A549 (cell line): ENCODE measurements at regions of chr10 and their contacts with region 1.

Region 1: GRCh38 chr10:100878291-100878910 is 34.4 kb upstream of the SLF2 start:
- DNase-seq: peak; percentile 80 to 92
- ATAC-seq: peak; percentile 90 to 97
- H3K4me3 ChIP-seq: no peak overlapping the region
- H3K27ac ChIP-seq: peak overlapping the region in 1 of 2 experiments; percentile 64; a peak in 2 of 6 replicates
- H3K4me1 ChIP-seq: peaks cover 15% of the 10 kb centered on the region; the same call in 2 of the 3 replicates
- CTCF ChIP-seq: peak; percentile 91
- EP300 ChIP-seq: no peak
- POLR2A ChIP-seq: no peak
- RAD21 ChIP-seq: peak; percentile 91 to 94

Region 2: DNA sequence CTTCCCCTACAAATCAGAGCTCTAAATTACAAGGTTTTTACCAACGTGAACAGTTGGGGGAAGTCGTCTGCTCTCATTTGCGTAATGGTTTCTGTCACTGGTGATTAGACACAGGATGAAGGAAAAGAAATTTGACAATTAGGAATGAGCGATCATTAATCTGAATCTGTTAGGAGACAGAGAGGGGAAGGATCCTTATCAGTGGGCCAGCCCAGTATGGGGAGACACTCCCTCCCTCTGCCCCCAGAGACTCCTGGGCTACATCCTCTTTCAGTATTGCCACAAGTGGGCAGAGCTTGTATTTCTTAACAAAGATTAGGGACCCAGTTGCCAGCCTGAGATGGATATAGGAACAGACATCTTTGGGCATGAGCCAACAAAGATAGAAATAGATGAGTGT is 327.2 kb before region 1 on chr10:
- CTCF ChIA-PET with region 1: interaction called, 24 read pairs
- POLR2A ChIA-PET with region 1: no interaction called
- DNase-seq: no peak
- ATAC-seq: no peak
- H3K4me3 ChIP-seq: no peak overlapping the region
- H3K27ac ChIP-seq: no peak overlapping the region
- H3K4me1 ChIP-seq: peaks cover 6% of the 10 kb centered on the region; the same call in 1 of the 3 replicates
- CTCF ChIP-seq: no peak
- EP300 ChIP-seq: no peak
- POLR2A ChIP-seq: no peak
- RAD21 ChIP-seq: no peak

Region 3: GRCh38 chr10:100670828-100671479 is 207.4 kb before region 1 on chr10:
- CTCF ChIA-PET with region 1: interaction called, 36 read pairs
- POLR2A ChIA-PET with region 1: no interaction called
- DNase-seq: peak; percentile 26 to 47
- ATAC-seq: peak; percentile 85 to 94
- H3K4me3 ChIP-seq: peak overlapping the region; percentile 37
- H3K27ac ChIP-seq: peak overlapping the region in 1 of 2 experiments; percentile 43; a peak in 2 of 6 replicates
- H3K4me1 ChIP-seq: no peaks in the 10 kb centered on the region
- CTCF ChIP-seq: peak; percentile 97
- EP300 ChIP-seq: no peak
- POLR2A ChIP-seq: no peak
- RAD21 ChIP-seq: peak; percentile 41 to 74

Region 4: GRCh38 chr10:100728928-100729861 is 149.2 kb before region 1 on chr10:
- CTCF ChIA-PET with region 1: interaction called, 15 read pairs
- POLR2A ChIA-PET with region 1: no interaction called
- DNase-seq: peak; percentile 90 to 93
- ATAC-seq: peak; percentile 79 to 88
- H3K4me3 ChIP-seq: peak overlapping the region; percentile 46
- H3K27ac ChIP-seq: peak overlapping the region; percentile 80 to 93
- H3K4me1 ChIP-seq: peaks cover 21% of the 10 kb centered on the region
- CTCF ChIP-seq: peak; percentile 85
- EP300 ChIP-seq: no peak
- POLR2A ChIP-seq: peak; percentile 52
- RAD21 ChIP-seq: peak; percentile 62 to 73

Region 5: GRCh38 chr10:100858747-100859483 is 19.5 kb before region 1 on chr10:
- CTCF ChIA-PET with region 1: interaction called, 25 read pairs
- POLR2A ChIA-PET with region 1: no interaction called
- DNase-seq: no peak
- ATAC-seq: no peak
- H3K4me3 ChIP-seq: no peak overlapping the region
- H3K27ac ChIP-seq: no peak overlapping the region
- H3K4me1 ChIP-seq: no peaks in the 10 kb centered on the region
- CTCF ChIP-seq: no peak
- EP300 ChIP-seq: no peak
- POLR2A ChIP-seq: no peak
- RAD21 ChIP-seq: no peak

Region 6: GRCh38 chr10:100998991-100999741 is 120.8 kb after region 1 on chr10:
- CTCF ChIA-PET with region 1: no interaction called
- POLR2A ChIA-PET with region 1: no interaction called
- DNase-seq: peak; percentile 74 to 84
- ATAC-seq: peak; percentile 40 to 64
- H3K4me3 ChIP-seq: peak overlapping the region; percentile 92
- H3K27ac ChIP-seq: peak overlapping the region; percentile 98
- H3K4me1 ChIP-seq: peaks cover 27% of the 10 kb centered on the region
- CTCF ChIP-seq: peak; percentile 83
- EP300 ChIP-seq: no peak
- POLR2A ChIP-seq: peak; percentile 61
- RAD21 ChIP-seq: peak; percentile 21 to 57; a peak in 4 of 5 replicates